ENCODE measurements at regions of chr14 and their contacts with region 1.

Region 1: DNA sequence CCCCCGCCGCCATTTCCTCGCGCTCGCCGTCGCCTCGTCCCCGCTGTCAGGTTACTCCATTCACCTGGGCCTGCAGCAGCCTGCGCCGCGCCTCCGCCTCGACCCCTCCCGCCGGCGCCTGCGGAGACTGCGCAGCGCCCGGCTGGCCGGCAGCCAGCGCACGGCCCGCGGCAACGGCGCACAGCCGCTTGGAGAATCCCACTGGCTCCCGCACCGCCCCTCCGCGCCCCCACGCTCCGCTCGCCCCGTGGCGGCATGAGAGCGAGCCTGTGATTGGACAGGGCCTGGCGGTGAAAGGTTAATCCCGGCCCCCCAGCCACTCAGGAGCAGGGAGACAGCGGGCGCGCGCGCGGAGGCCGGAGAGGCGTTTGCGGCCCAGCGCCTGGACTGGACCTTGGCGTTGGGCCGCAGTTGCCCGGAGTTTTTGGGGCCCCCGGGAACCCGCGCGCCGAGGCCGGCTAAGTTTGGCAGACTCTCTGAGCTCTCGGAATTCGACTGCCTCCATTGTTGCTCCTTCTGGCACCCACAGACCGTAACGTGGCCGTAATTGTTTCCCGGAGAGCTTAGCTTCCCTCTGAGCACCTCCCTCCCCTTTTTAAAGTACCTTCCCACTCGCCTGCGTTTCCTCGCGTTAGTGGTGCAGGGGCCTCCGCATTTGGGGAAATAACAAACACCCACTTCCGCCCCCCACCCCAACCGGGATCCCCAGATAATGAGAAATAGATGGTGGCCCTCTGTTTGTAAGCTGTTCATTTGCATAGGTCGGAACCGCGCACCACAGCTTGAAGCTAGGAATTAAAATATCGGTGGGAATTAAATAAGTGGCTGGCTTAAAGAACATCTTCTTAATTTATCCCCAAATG is at the start of gene DICER1:
- DNase-seq: peak; percentile 95 to 100 (median 99)

Region 2: DNA sequence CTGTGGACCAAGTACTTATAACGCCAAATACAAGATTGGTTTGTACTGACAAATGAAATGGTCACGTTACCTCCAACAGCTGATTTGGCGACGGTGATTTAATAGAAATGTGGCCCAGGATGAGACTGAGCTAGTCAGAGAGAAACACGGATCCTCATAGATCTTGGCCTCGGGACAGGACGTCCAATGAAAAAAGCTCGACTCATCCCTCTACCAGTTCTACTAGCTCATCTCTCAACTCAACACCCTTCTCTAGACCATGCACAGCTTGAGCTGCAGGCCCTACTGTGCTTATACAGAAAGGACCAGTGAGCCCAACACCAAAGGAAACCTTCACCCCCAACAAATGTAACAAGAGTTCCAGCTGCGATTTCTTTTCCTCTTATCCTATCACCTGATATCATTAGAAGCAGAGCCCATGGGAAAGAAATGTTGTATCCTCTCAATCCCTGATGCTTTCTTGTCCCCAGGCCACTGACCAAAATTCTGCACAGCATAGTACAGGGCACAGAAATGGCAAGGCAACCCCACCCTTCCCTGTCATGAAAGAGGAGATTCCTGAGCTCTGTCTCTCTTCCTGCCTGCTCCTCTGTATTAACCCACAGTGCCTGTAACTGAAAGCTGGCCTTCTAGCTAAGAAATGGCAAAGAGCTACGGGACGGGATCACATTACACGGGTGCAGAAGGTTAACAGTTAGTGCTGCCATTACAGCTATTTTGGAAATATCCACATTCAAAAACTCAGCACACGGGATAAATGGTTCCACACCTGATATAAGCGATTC is 39.4 kb before region 1 on chr14:
- intact Hi-C with region 1: loop called (anchors 5 kb)
- DNase-seq: no peak

Measured in head of caudate nucleus (tissue), 42 donors.